Left colon (tissue), 2 donors: ENCODE measurements at regions of chr3 and their contacts with region 1.

Region 1: DNA sequence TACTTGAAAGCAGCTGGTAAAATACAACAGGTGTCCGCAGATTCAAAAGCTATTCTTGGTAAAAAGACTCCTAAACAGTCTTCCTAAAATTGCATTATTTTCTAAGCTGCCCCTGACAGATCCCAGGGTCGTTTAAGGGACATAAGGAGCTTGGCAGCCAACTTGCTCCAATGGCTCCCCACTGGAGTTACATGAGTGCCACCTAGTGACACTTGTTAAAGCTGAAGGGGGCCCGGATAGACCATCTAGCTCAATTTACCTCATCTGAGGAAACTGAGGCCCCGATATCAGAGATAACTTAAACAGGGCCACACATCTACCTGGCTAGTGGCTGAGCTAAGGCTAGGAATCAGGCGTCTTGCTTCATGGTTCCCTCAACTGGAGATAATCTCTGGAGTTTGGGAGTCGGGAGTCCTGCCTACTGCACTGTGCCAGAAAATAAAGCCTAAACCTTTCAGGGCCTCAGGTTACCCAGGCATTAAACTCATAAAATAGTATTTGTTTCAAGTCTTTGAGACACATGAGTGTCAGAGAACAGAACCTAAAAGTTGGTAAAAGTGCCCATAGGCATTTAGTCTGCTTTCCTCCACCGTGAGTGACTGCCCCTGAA is 6.5 kb upstream of the TBC1D23 start:
- DNase-seq: peak; percentile 30 to 41
- ATAC-seq: peak; percentile 78

Region 2: GRCh38 chr3:99833617-99834205 is 420.6 kb before region 1 on chr3:
- intact Hi-C with region 1: loop called (anchors 5 to 10 kb)
- DNase-seq: no peak
- ATAC-seq: no peak

Region 3: DNA sequence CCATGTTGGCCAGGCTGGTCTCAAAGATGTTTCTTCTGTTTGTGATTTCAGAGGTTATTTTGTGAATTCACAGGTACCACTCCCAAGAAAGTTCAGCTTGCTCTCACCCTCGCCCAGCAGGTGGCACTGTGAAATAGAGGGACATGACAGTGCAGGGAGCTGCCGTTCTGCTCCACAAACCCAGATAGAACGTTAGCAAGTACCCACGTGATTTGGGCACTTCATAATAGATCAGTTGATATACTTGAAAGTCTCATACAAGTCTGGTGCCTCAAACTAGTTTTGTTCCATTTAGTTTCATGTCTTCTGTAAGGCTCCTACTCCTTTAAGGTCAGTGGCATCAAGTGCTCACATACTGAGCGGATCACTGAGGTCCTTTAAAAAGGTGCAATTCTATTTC is 185.4 kb before region 1 on chr3:
- intact Hi-C with region 1: loop called in 1 of 2 experiments (anchors 10 kb)
- DNase-seq: peak; percentile 69 to 86
- ATAC-seq: peak; percentile 94